Dendritic cell treated with granulocyte-macrophage colony-stimulating factor and Interleukin-4, amounts not matched to agents 40 ng/mL and 50 ng/mL, for 4 days (primary cell): ENCODE measurements at regions of chr4 and their contacts with region 1.

Region 1: GRCh38 chr4:88378691-88379559 is at the start of gene HERC6:
- H3K4me3 Mint-ChIP-seq: peak within 1 kb of the TSS; percentile 93
- H3K27ac Mint-ChIP-seq: peak within 1 kb of the TSS; percentile 99
- H3K4me1 Mint-ChIP-seq: peaks cover 36% of the 10 kb centered on the region
- H3K27me3 Mint-ChIP-seq: no peaks in the 10 kb centered on the region

Region 2: GRCh38 chr4:88244816-88245579 is 133.9 kb before region 1 on chr4:
- intact Hi-C with region 1: no loop called
- H3K4me3 Mint-ChIP-seq: peak overlapping the region; percentile 57
- H3K27ac Mint-ChIP-seq: peak overlapping the region; percentile 56
- H3K4me1 Mint-ChIP-seq: peaks cover 22% of the 10 kb centered on the region
- H3K27me3 Mint-ChIP-seq: no peaks in the 10 kb centered on the region

Region 3: GRCh38 chr4:88456757-88457306 is 77.9 kb after region 1 on chr4 and contains the start of gene HERC5:
- intact Hi-C with region 1: loop called (anchors 2 kb)
- H3K4me3 Mint-ChIP-seq: peak within 1 kb of the TSS; percentile 96
- H3K27ac Mint-ChIP-seq: peak within 1 kb of the TSS; percentile 89
- H3K4me1 Mint-ChIP-seq: peaks cover 13% of the 10 kb centered on the region
- H3K27me3 Mint-ChIP-seq: peaks cover 5% of the 10 kb centered on the region

Region 4: GRCh38 chr4:88523325-88524129 is 144.6 kb after region 1 on chr4 and contains the start of gene PYURF:
- intact Hi-C with region 1: loop called (anchors 2 kb)
- H3K4me3 Mint-ChIP-seq: peak within 1 kb of the TSS; percentile 99
- H3K27ac Mint-ChIP-seq: peak within 1 kb of the TSS; percentile 95
- H3K4me1 Mint-ChIP-seq: peaks cover 8% of the 10 kb centered on the region
- H3K27me3 Mint-ChIP-seq: peaks cover 1% of the 10 kb centered on the region